ENCODE measurements at regions of chr2 and their contacts with region 1.

Region 1: DNA sequence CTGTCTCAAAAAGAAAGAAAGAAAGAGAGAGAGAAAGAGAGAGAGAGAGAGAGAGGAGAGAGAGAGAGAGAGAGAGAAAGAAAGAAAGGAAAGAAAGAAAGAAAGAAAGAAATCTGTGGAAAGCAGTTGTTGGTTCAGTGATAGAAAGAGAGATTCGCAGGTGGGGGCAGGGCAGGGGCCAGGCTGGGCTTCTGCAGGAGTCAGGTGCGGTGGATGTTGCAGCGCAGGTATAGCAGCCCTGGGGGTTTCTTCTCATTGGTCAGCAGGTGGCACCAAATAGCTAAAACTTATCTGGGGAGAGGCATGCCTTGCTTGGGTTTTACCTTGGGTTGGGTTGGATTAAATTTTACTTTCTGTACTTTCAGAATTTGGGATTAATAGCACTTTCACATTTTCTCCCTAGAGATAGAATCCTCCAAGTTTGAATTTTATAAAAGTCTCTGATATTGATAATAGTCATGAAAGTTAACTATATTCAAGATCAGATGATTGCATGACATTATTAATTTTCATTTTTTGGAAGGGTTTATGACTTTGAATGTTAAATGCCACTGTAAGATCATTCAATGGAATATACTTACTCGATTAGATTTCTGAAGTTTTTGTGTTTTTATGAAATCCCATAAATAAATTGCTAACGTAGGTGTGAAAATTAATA is 66.6 kb downstream of the SPTBN1 start:
- DNase-seq: no peak
- H3K4me3 ChIP-seq: no peak overlapping the region
- H3K27ac ChIP-seq: no peak overlapping the region
- H3K4me1 ChIP-seq: peaks cover 4 to 36% of the 10 kb centered on the region in 2 donors
- H3K27me3 ChIP-seq: no peaks in the 10 kb centered on the region
- CTCF ChIP-seq: peak; percentile 28 to 64 (median 51)

Region 2: GRCh38 chr2:53802617-53803151 is 720.1 kb before region 1 on chr2:
- intact Hi-C with region 1: no loop called
- DNase-seq: no peak
- H3K4me3 ChIP-seq: no peak overlapping the region
- H3K27ac ChIP-seq: no peak overlapping the region
- H3K4me1 ChIP-seq: no peaks in the 10 kb centered on the region
- H3K27me3 ChIP-seq: no peaks in the 10 kb centered on the region
- CTCF ChIP-seq: no peak

Region 3: DNA sequence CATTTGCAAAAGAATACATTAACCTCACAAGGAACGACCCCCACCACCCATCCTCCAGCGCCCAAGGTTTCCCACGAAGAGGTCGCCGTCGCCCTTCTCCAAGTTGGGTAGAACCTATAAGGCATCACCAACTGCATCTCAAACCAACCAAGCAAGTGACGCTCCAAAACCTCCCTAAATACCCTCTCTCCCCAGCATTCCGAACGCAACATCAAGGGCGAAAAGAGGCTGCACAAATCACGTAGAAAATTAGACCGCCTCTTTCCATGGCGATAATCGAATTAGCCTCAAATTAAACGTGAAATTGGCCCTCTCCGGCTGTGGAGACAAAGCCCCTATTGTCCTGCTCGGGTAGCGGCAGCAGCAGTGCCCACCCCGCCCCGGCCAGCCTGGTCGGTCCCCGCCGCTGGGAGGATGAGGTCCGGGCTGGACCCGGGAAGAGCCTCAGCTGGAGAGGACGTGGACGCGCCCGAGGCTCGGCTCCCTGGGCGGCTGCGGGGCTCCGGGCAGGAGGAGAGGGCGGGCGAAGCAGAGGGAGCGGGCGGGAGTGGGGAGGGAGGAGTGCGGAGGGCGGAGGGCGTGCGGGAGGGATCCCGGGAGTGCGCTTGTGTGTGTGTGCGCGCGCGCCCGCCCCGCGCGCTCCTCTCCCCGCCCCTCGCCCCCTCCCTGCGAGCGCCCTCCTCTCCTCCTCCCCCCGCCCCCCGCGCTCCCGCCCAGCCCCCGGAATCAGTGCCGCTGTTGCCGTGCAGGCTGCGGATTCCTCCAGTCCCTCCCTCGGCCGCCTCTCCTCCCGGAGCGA is 67.0 kb before region 1 on chr2 and contains the start of gene SPTBN1:
- intact Hi-C with region 1: no loop called
- DNase-seq: peak; percentile 38 to 92
- H3K4me3 ChIP-seq: peak within 1 kb of the TSS; percentile 77 to 96
- H3K27ac ChIP-seq: peak within 1 kb of the TSS; percentile 88 to 92
- H3K4me1 ChIP-seq: peaks cover 0 to 11% of the 10 kb centered on the region in 2 donors
- H3K27me3 ChIP-seq: no peaks in the 10 kb centered on the region
- CTCF ChIP-seq: peak in 1 of 3 experiments; percentile 6
- total RNA-seq, gene SPTBN1: 246 TPM

Region 4: DNA sequence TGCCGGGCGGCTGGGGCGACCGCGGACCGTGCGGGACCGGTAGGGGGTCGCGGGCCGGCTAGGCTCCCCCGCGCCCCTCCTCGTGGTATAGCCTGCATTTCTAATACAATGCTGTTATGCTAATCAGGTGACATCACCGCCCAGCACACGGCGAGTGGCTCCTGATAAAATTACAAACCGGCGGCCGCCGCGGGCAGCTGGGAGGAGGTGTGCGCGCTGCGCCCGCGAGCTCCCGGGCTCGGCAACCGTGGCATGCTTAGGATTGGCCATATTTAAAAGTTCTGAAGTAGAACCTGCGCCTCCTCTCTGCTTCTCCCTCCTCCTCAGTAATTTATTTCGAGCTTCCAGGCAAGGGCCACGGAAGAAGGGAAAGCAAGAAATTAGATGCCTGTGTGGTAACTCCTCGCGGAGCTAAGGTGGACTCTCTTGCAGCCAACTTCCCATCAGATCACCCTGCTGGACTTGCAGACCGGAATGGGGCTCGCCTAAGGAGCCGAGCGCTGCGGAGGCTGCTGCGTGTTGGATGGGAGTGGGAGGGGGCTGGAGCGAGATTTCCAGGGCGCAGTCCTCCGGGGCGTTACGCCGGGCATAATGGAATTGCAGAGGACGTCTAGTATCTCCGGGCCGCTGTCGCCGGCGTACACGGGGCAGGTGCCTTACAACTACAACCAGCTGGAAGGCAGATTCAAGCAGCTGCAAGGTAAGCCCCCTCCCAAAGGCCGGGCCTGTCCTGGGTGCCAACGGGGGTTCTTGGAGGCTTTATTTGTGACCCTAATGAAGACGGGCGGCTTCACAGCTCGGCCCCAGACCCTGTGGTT is 35.6 kb after region 1 on chr2:
- intact Hi-C with region 1: loop called (anchors 5 kb)
- DNase-seq: peak in 1 of 2 donors; percentile 82
- H3K4me3 ChIP-seq: peak overlapping the region; percentile 67 to 71
- H3K27ac ChIP-seq: peak overlapping the region; percentile 77 to 78
- H3K4me1 ChIP-seq: peaks cover 4 to 26% of the 10 kb centered on the region in 2 donors
- H3K27me3 ChIP-seq: no peaks in the 10 kb centered on the region
- CTCF ChIP-seq: no peak

Region 5: GRCh38 chr2:54599914-54600313 is 77.2 kb after region 1 on chr2:
- intact Hi-C with region 1: loop called (anchors 5 kb)
- DNase-seq: peak in 1 of 2 donors; percentile 83
- H3K4me3 ChIP-seq: no peak overlapping the region
- H3K27ac ChIP-seq: peak overlapping the region; percentile 75 to 79
- H3K4me1 ChIP-seq: peaks cover 29 to 80% of the 10 kb centered on the region in 2 donors
- H3K27me3 ChIP-seq: no peaks in the 10 kb centered on the region
- CTCF ChIP-seq: no peak

Region 6: GRCh38 chr2:54634564-54635511 is 112.1 kb after region 1 on chr2:
- intact Hi-C with region 1: loop called (anchors 5 kb)
- DNase-seq: no peak
- H3K4me3 ChIP-seq: no peak overlapping the region
- H3K27ac ChIP-seq: peak overlapping the region; percentile 55 to 64
- H3K4me1 ChIP-seq: peaks cover 4 to 29% of the 10 kb centered on the region in 2 donors
- H3K27me3 ChIP-seq: no peaks in the 10 kb centered on the region
- CTCF ChIP-seq: no peak

Region 7: DNA sequence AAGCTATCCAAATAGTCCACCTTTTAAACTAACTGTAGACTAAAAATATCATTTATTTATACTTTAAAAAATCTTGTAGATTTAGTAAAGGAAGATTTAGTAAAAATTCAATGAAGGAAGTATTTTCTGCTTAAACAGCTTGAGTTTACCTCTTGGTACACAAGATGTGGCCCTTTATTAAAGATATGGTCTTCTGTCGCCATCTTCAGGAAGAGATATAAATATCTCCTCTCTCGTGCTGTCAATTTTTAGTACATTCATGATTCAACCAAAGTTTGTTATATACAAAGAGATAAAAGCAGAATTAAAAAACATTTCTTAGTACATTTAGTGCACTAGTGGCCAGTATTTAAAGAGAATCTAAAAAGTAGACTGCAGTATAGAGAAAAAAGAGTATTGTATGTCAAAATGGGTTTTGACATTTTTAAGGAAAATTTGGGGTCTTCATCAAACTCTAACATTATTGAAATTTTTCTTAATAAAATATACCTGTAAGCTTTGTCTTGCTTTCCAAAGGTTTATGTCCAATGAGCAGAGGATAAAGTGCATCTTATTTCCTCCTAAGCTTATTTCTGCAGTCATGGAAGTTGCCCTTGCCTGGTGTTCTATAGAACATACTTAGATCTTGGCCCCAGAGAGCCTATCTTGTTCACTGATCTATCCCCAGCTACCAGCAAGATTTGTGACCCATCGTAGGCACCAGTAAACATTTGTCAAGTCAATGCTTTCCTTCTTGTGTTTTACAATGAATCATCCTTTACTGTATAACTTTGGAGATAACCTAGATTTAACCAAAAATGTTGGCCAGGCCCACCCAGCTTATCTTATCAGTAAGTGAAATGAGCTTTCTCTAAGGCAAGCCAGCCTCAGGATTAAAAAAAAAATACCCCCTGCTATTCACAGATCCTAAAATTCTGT is 182.2 kb after region 1 on chr2:
- intact Hi-C with region 1: loop called (anchors 5 kb)
- DNase-seq: no peak
- H3K4me3 ChIP-seq: no peak overlapping the region
- H3K27ac ChIP-seq: no peak overlapping the region
- H3K4me1 ChIP-seq: peaks cover 0 to 7% of the 10 kb centered on the region in 2 donors
- H3K27me3 ChIP-seq: no peaks in the 10 kb centered on the region
- CTCF ChIP-seq: peak; percentile 52 to 66 (median 58)

Region 8: GRCh38 chr2:55159037-55159651 is 636.4 kb after region 1 on chr2:
- intact Hi-C with region 1: no loop called
- DNase-seq: peak in 1 of 2 donors; percentile 74
- H3K4me3 ChIP-seq: no peak overlapping the region
- H3K27ac ChIP-seq: peak overlapping the region; percentile 79 to 81
- H3K4me1 ChIP-seq: peaks cover 14 to 67% of the 10 kb centered on the region in 2 donors
- H3K27me3 ChIP-seq: no peaks in the 10 kb centered on the region
- CTCF ChIP-seq: no peak